B cell (primary cell): ENCODE measurements at regions of chr2 and their contacts with region 1.

Region 1: DNA sequence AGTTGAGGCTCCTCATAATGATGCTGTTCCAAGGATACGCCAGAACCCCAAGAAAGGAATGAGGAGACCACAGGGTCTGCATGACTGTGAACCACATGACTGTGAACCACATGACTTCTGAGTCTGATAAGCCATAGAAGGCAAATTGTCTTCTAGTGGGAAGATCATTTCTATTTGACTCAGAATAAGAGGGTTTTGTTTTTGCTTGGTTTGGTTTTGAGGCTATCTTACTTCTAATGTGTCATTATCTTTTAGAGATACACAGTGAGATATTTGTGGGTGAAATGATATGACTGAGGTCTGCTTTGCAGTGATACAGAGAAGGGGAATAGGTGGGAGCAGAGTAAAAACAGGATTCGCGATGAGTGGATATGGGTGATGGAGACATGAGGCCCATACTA is 28.9 kb upstream of the BCL2L11 start:
- DNase-seq: no peak
- ATAC-seq: no peak
- H3K4me3 ChIP-seq: no peak overlapping the region
- H3K4me3 Mint-ChIP-seq: no peak overlapping the region
- H3K27ac ChIP-seq: no peak overlapping the region
- H3K27ac Mint-ChIP-seq: no peak overlapping the region
- H3K4me1 ChIP-seq: no peaks in the 10 kb centered on the region
- H3K4me1 Mint-ChIP-seq: no peaks in the 10 kb centered on the region
- H3K27me3 ChIP-seq: peaks cover 0 to 5% (median 2%) of the 10 kb centered on the region in 4 experiments
- H3K27me3 Mint-ChIP-seq: peaks cover 10% of the 10 kb centered on the region
- CTCF ChIP-seq: no peak

Region 2: DNA sequence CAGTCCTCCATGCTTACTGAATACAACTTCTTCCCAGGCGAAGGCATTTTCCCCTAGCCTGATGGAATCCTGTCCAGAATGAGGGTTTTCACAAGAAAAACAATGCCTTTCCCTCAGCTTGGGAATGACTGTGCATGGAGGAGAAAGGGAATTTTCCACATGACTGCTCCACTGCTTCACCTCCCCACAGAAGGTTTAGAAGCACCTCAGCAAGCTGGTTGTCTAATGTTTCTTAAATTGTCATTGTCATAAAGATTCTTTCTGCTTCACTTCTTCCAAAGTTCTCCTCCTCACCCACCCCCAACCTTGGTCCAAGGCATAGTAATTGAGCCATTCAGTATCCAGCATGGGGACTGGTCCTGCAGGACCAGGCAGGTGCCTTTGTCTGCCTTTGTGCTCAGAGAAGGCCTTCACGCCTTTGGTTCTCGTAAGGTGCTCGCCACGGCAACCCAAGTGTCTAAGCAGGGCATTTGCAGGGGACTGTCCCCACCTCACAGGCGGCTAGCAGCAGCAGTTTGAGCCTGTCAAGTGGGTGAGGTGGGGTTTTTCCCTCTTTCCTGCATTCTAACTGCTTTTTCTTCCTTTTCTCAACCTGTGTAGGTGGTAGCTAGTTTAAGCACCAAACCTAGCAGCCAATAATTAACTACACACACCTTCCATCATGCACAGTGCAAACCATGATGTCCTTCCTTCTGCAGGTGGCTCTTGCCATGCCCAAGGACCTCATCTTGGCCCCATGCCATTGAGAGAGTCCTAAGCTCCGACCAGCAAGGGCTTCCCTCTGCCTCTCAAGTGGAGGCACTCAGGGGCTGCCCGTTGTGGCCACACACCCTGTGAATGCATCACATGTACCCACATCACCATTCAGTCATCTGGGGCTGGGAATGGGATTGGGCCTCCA is 36.8 kb before region 1 on chr2:
- CTCF ChIA-PET with region 1: no interaction called
- POLR2A ChIA-PET with region 1: no interaction called
- intact Hi-C with region 1: loop called (anchors 5 kb)
- DNase-seq: peak; percentile 60
- ATAC-seq: peak; percentile 68
- H3K4me3 ChIP-seq: no peak overlapping the region
- H3K4me3 Mint-ChIP-seq: peak overlapping the region; percentile 56
- H3K27ac ChIP-seq: peak overlapping the region in 1 of 2 donors; percentile 34
- H3K27ac Mint-ChIP-seq: peak overlapping the region; percentile 78
- H3K4me1 ChIP-seq: peaks cover 55 to 67% of the 10 kb centered on the region in 2 donors
- H3K4me1 Mint-ChIP-seq: peaks cover 58% of the 10 kb centered on the region
- H3K27me3 ChIP-seq: no peaks in the 10 kb centered on the region
- H3K27me3 Mint-ChIP-seq: no peaks in the 10 kb centered on the region
- CTCF ChIP-seq: no peak

Region 3: GRCh38 chr2:111106706-111107105 is 14.9 kb after region 1 on chr2:
- CTCF ChIA-PET with region 1: no interaction called
- POLR2A ChIA-PET with region 1: no interaction called
- intact Hi-C with region 1: no loop called
- DNase-seq: no peak
- ATAC-seq: no peak
- H3K4me3 ChIP-seq: no peak overlapping the region
- H3K4me3 Mint-ChIP-seq: no peak overlapping the region
- H3K27ac ChIP-seq: no peak overlapping the region
- H3K27ac Mint-ChIP-seq: no peak overlapping the region
- H3K4me1 ChIP-seq: no peaks in the 10 kb centered on the region
- H3K4me1 Mint-ChIP-seq: no peaks in the 10 kb centered on the region
- H3K27me3 ChIP-seq: peaks cover 0 to 3% (median 0%) of the 10 kb centered on the region in 4 experiments
- H3K27me3 Mint-ChIP-seq: peaks cover 13% of the 10 kb centered on the region
- CTCF ChIP-seq: no peak

Region 4: GRCh38 chr2:111168528-111169239 is 76.9 kb after region 1 on chr2:
- CTCF ChIA-PET with region 1: no interaction called
- POLR2A ChIA-PET with region 1: interaction called, 11 read pairs
- intact Hi-C with region 1: no loop called
- DNase-seq: no peak
- ATAC-seq: peak; percentile 33
- H3K4me3 ChIP-seq: no peak overlapping the region
- H3K4me3 Mint-ChIP-seq: no peak overlapping the region
- H3K27ac ChIP-seq: no peak overlapping the region
- H3K27ac Mint-ChIP-seq: peak overlapping the region; percentile 65
- H3K4me1 ChIP-seq: peaks cover 5 to 8% of the 10 kb centered on the region in 2 donors
- H3K4me1 Mint-ChIP-seq: peaks cover 17% of the 10 kb centered on the region
- H3K27me3 ChIP-seq: no peaks in the 10 kb centered on the region
- H3K27me3 Mint-ChIP-seq: no peaks in the 10 kb centered on the region
- CTCF ChIP-seq: no peak

Region 5: DNA sequence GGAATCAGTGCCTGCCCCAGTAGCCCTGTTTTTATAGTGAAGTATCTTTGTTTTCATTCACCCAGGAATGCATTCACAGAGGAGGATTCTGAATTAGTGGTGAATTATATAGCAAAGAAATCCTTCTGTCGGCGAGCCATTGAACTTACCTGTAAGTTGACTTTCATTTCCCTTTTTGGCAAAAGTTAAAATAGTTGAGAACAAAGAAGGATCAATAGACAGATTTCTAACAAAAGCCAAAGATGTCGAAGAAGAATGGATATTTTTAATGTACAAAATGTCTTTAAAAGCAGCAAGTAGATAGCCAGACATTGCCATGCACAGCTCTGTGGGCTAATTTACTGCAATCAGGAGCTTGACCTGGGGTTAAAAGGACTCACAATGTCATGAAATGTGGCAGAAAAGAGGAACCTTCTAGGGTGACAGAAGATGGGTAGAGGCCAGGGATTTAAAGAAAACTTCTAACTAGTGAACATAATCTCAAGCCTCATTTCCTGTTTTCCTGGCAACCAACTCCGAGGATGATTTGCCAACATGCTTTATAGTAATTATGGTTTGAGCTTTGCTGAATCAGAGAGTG is 909.4 kb after region 1 on chr2:
- CTCF ChIA-PET with region 1: no interaction called
- POLR2A ChIA-PET with region 1: no interaction called
- intact Hi-C with region 1: no loop called
- DNase-seq: peak; percentile 60
- ATAC-seq: peak; percentile 65
- H3K4me3 ChIP-seq: peak overlapping the region in 3 of 5 experiments; percentile 8 to 37 (median 35)
- H3K4me3 Mint-ChIP-seq: peak overlapping the region; percentile 36
- H3K27ac ChIP-seq: peak overlapping the region in 1 of 2 donors; percentile 49
- H3K27ac Mint-ChIP-seq: peak overlapping the region; percentile 67
- H3K4me1 ChIP-seq: peaks cover 23 to 25% of the 10 kb centered on the region in 2 donors
- H3K4me1 Mint-ChIP-seq: peaks cover 29% of the 10 kb centered on the region
- H3K27me3 ChIP-seq: no peaks in the 10 kb centered on the region
- H3K27me3 Mint-ChIP-seq: no peaks in the 10 kb centered on the region
- CTCF ChIP-seq: no peak